CD8-positive, alpha-beta T cell (primary cell): ENCODE measurements at regions of chr4 and their contacts with region 1.

Region 1: DNA sequence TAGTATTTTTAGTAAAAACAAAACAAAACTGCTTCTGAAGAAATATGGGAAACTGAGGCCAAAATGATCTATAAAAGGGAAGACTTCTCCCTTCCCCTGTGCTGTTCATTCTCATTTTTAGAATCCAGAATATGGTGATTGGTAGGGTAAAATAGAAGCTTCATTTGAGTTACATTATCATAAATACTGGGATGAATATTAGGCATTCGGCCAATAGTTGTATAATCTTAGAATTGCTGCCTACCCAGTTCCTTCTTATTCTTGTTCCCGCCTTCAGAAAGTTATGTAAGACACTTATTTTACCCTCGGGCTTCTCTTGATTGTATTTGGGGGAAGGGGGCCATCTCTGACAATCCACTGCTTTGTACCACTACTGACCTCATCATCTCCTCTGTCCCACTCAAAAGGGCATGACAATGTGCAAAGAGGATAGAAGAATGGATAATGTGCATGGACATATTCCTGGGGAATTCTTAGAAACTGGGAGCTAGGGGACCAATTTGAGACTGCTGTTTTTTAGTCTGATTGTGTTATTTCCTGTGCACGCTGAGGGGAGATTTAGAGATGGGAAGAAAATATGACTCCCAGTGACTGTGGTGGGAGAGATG is 588 bp downstream of the ART3 start:
- DNase-seq: no peak
- ATAC-seq: no peak
- H3K4me3 ChIP-seq: no peak overlapping the region
- H3K4me3 Mint-ChIP-seq: no peak overlapping the region
- H3K27ac ChIP-seq: no peak overlapping the region
- H3K27ac Mint-ChIP-seq: no peak overlapping the region
- H3K4me1 ChIP-seq: no peaks in the 10 kb centered on the region
- H3K4me1 Mint-ChIP-seq: no peaks in the 10 kb centered on the region
- H3K27me3 ChIP-seq: no peaks in the 10 kb centered on the region
- H3K27me3 Mint-ChIP-seq: peaks cover 9% of the 10 kb centered on the region
- CTCF ChIP-seq: no peak

Region 2: DNA sequence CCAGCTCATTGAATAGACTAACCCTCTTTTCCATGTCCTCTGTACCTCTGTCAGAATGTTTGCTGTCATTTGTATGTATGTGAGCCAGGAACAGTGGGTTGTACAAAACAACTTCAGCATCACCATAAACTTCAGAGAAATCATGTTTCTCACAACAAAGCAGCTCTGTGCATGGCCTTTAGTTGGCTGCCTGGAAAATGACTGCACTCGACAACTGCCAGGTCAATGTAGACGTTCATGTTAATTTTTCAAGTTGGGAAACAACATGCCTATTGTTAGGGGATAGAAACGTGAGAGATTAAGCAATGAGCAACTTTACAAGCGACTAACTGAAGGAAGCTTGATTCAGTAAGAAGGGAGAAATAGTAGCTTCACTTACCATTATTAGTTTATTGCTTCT is 21.4 kb before region 1 on chr4:
- CTCF ChIA-PET with region 1: no interaction called
- POLR2A ChIA-PET with region 1: no interaction called
- intact Hi-C with region 1: loop called in 1 of 2 experiments (anchors 1 kb)
- DNase-seq: no peak
- ATAC-seq: no peak
- H3K4me3 ChIP-seq: no peak overlapping the region
- H3K4me3 Mint-ChIP-seq: no peak overlapping the region
- H3K27ac ChIP-seq: no peak overlapping the region
- H3K27ac Mint-ChIP-seq: no peak overlapping the region
- H3K4me1 ChIP-seq: no peaks in the 10 kb centered on the region
- H3K4me1 Mint-ChIP-seq: no peaks in the 10 kb centered on the region
- H3K27me3 ChIP-seq: no peaks in the 10 kb centered on the region
- H3K27me3 Mint-ChIP-seq: peaks cover 15% of the 10 kb centered on the region
- CTCF ChIP-seq: no peak

Region 3: GRCh38 chr4:76198411-76199237 is 123.5 kb after region 1 on chr4:
- CTCF ChIA-PET with region 1: no interaction called
- POLR2A ChIA-PET with region 1: no interaction called
- intact Hi-C with region 1: no loop called
- DNase-seq: peak in 3 of 9 experiments; percentile 31 to 49 (median 31)
- ATAC-seq: peak; percentile 45
- H3K4me3 ChIP-seq: no peak overlapping the region
- H3K4me3 Mint-ChIP-seq: peak overlapping the region; percentile 3
- H3K27ac ChIP-seq: peak overlapping the region in 1 of 2 experiments; percentile 15
- H3K27ac Mint-ChIP-seq: peak overlapping the region; percentile 71
- H3K4me1 ChIP-seq: peaks cover 37% of the 10 kb centered on the region
- H3K4me1 Mint-ChIP-seq: peaks cover 53% of the 10 kb centered on the region
- H3K27me3 ChIP-seq: no peaks in the 10 kb centered on the region
- H3K27me3 Mint-ChIP-seq: no peaks in the 10 kb centered on the region
- CTCF ChIP-seq: no peak

Region 4: GRCh38 chr4:76772498-76773106 is 697.5 kb after region 1 on chr4:
- CTCF ChIA-PET with region 1: no interaction called
- POLR2A ChIA-PET with region 1: no interaction called
- intact Hi-C with region 1: no loop called
- DNase-seq: no peak
- ATAC-seq: no peak
- H3K4me3 ChIP-seq: no peak overlapping the region
- H3K4me3 Mint-ChIP-seq: no peak overlapping the region
- H3K27ac ChIP-seq: no peak overlapping the region
- H3K27ac Mint-ChIP-seq: no peak overlapping the region
- H3K4me1 ChIP-seq: no peaks in the 10 kb centered on the region
- H3K4me1 Mint-ChIP-seq: no peaks in the 10 kb centered on the region
- H3K27me3 ChIP-seq: peaks cover 0 to 2% of the 10 kb centered on the region in 2 experiments
- H3K27me3 Mint-ChIP-seq: peaks cover 2% of the 10 kb centered on the region
- CTCF ChIP-seq: no peak